ENCODE measurements at regions of chr19 and their contacts with region 1.

Region 1: DNA sequence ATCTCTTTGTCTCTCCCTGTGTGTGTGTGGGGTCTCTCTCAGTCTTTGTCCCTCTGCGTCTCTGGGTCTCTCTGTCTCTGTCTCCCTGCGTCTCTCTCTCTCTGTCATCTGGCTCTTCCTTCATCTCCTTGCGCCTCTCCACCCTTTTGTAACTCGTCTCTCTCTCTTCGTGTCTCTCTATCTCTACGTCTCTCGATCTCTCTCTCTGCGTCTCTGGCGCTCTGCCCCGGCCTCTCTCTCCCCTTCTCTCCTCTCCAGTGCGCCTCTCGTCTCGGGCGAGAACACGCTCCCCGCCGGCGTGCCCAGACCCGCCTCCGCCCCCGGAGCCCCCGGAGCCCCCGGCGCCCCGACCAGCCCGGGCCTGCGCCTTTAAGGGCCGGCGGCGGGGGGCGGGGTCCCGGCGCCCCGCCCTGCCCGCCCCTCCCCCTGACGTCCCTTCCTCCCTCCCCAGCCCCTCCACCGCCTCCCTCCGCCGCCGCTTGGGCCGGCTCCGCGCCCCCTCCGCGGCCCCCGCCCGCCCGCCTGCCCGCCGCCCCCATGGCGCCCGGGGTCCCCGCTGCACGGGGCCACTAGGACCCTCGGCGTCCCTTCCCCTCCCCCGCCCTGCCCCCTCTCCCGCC is at the start of gene MARK4:
- DNase-seq: peak in 8 of 9 donors; percentile 32 to 70 (median 51)
- ATAC-seq: peak; percentile 80
- H3K4me3 ChIP-seq: peak within 1 kb of the TSS; percentile 63
- H3K4me3 Mint-ChIP-seq: peak within 1 kb of the TSS; percentile 87 to 96 (median 94)
- H3K27ac ChIP-seq: peak within 1 kb of the TSS; percentile 72
- H3K27ac Mint-ChIP-seq: peak within 1 kb of the TSS; percentile 28 to 90 (median 81)
- H3K4me1 ChIP-seq: peaks cover 19 to 20% of the 10 kb centered on the region in 2 donors
- H3K4me1 Mint-ChIP-seq: peaks cover 23 to 42% (median 35%) of the 10 kb centered on the region in 7 donors
- H3K27me3 ChIP-seq: no peaks in the 10 kb centered on the region
- H3K27me3 Mint-ChIP-seq: peaks cover 0 to 5% (median 0%) of the 10 kb centered on the region in 5 donors
- total RNA-seq, gene MARK4: 22.4 to 39.2 (median 25.5) TPM

Region 2: DNA sequence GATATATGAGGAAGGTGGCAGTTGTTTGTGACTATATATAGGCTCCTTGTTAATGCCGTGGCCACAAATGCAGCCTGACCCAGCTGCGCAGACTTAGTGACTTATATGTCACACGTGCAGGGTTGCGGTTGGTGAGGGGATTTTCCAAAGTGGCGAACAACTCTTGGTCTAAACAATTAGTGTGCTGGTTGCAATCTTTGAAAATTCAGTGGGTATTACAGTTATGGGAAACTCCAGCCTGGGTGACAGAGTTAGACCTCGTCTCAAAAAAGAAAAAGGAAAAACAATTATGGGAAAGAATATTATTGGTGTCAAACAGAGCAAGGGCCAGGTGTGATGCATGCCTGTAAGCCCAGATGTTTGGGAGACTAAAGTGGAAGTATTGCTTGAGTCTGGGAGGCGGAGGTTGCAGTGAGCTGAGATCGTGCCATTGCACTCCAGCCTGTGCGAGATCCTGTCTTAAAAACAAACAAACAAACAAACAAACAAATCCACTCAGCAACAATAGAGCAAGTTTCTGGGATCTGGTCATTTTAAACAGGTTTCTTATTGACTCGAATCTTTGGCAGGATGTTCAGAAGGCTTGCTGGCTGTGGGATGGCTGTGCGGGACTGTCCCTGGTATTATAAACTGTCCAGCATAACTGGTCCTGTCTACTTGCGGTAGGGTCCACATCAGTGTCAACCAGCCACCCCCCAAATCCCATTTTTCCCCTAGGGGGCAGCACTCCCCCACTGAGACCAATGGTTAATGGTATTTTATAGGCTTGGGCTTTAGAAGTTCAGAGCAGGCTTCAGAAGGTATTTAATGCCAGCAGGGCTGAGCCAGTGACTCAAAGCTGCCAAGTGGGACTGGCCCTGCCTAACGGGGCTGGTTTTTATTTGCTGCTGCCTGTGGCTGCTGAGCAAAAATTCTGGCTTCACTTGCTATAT is 234.3 kb before region 1 on chr19:
- CTCF ChIA-PET with region 1: no interaction called
- POLR2A ChIA-PET with region 1: no interaction called
- intact Hi-C with region 1: loop called in 1 of 2 experiments (anchors 1 kb)
- DNase-seq: peak; percentile 28 to 75 (median 61)
- ATAC-seq: peak; percentile 81
- H3K4me3 ChIP-seq: peak overlapping the region; percentile 4
- H3K4me3 Mint-ChIP-seq: peak overlapping the region in 1 of 10 donors; percentile 25
- H3K27ac ChIP-seq: peak overlapping the region; percentile 40
- H3K27ac Mint-ChIP-seq: peak overlapping the region; percentile 23 to 89 (median 54)
- H3K4me1 ChIP-seq: peaks cover 0 to 11% of the 10 kb centered on the region in 2 donors
- H3K4me1 Mint-ChIP-seq: peaks cover 0 to 9% (median 0%) of the 10 kb centered on the region in 7 donors
- H3K27me3 ChIP-seq: no peaks in the 10 kb centered on the region
- H3K27me3 Mint-ChIP-seq: no peaks in the 10 kb centered on the region

Region 3: GRCh38 chr19:45340232-45340898 is 89.4 kb after region 1 on chr19 and contains the start of gene KLC3:
- CTCF ChIA-PET with region 1: no interaction called
- POLR2A ChIA-PET with region 1: no interaction called
- intact Hi-C with region 1: loop called in 1 of 2 experiments (anchors 1 kb)
- DNase-seq: peak in 8 of 9 donors; percentile 12 to 66 (median 28)
- ATAC-seq: peak; percentile 28
- H3K4me3 ChIP-seq: no peak within 1 kb of the TSS
- H3K4me3 Mint-ChIP-seq: peak within 1 kb of the TSS; percentile 56 to 82 (median 74)
- H3K27ac ChIP-seq: no peak within 1 kb of the TSS
- H3K27ac Mint-ChIP-seq: peak within 1 kb of the TSS in 2 of 9 donors; percentile 46 to 71
- H3K4me1 ChIP-seq: no peaks in the 10 kb centered on the region
- H3K4me1 Mint-ChIP-seq: peaks cover 4 to 11% (median 9%) of the 10 kb centered on the region in 7 donors
- H3K27me3 ChIP-seq: peaks cover 0 to 12% of the 10 kb centered on the region in 2 donors
- H3K27me3 Mint-ChIP-seq: peaks cover 24 to 39% (median 30%) of the 10 kb centered on the region in 5 donors
- total RNA-seq, gene KLC3: not detected

Measured in naive thymus-derived CD4-positive, alpha-beta T cell (primary cell).